ENCODE measurements at regions of chr7 and their contacts with region 1.

Region 1: GRCh38 chr7:51162724-51163329 is 153.8 kb downstream of the COBL start:
- DNase-seq: peak; percentile 93
- H3K4me3 ChIP-seq: no peak overlapping the region
- H3K27ac ChIP-seq: peak overlapping the region; percentile 40 to 51
- H3K4me1 ChIP-seq: no peaks in the 10 kb centered on the region
- H3K27me3 ChIP-seq: no peaks in the 10 kb centered on the region
- CTCF ChIP-seq: peak; percentile 70 to 92 (median 88)
- POLR2A ChIP-seq: no peak

Region 2: DNA sequence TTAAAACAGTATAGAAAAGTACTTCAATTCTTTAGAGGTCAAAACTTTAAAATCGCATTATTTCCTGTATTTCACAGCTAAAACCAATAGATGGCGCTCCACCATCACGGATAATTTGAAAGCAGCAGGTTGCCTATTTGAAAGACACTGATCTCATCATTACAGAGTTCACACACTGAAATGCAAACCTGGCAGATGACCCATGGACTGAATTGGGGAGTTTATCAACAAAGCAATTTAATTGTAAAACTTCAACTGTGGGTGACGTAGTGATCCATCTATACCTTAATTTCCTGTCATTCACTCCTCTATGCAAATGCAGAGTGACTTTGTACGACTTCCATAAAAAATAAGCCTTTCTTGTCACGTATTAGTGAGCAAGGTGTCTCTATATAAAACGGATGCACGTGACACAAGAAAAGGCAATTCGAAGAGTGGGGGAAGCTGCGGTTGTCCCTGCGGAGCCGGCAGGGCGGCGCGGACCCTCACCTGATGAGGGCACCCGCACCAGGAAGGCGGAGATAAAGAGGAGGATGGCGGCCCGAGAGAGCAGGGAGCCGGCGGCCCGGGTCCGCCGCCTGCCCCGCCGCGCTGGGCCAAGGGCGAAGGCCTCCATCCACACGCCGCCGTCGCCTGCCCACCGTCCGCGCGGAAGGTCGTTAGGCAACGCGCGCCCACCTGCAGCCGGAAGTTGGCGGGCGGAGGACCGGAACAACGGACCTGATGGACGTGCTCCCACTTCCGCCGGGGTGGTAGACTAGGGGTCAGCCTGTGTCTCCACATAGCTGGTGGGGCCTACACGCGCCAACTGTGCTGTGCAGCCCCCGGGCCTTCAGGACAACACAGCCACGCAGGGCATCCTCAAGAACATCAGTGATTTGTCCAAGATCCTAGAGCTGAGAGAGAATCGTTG is 1070.0 kb before region 1 on chr7 and contains the start of gene ZPBP:
- intact Hi-C with region 1: loop called (anchors 5 kb)
- DNase-seq: peak; percentile 26
- H3K4me3 ChIP-seq: peak within 1 kb of the TSS; percentile 32 to 41
- H3K27ac ChIP-seq: no peak within 1 kb of the TSS
- H3K4me1 ChIP-seq: no peaks in the 10 kb centered on the region
- H3K27me3 ChIP-seq: no peaks in the 10 kb centered on the region
- CTCF ChIP-seq: peak; percentile 23 to 77 (median 72)
- POLR2A ChIP-seq: no peak
- total RNA-seq, gene ZPBP: 13.6 TPM in 1 of 2 donors, not detected in the other

Region 3: DNA sequence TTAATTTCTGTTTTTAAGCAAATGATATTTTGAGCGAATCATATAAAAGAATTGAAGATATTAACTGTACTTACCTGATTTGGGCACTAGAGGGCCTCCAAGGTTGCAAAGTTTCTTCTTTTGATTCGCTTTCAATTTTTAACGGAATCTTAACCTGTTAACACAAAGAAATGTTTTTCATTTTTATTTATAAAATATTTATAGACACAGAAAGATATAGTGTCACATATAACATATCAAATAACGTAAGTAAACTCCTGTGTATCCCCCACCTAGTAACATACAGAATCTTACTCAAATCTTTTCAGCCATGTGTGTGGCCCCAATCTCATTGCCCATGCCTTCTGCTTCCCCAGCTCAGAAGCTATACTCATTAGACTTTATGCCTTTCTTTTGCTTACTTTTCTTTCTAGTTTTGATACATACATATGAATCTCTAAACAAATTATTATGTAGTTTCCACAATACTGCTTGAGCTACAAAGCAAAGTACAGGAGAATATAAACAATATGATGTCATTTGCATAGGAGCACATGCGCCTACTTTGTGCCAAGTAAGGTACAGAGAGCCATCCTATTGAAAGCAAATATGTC is 1020.3 kb before region 1 on chr7:
- intact Hi-C with region 1: loop called (anchors 2 kb)
- DNase-seq: no peak
- H3K4me3 ChIP-seq: no peak overlapping the region
- H3K27ac ChIP-seq: no peak overlapping the region
- H3K4me1 ChIP-seq: no peaks in the 10 kb centered on the region
- H3K27me3 ChIP-seq: no peaks in the 10 kb centered on the region
- CTCF ChIP-seq: peak; percentile 20 to 71 (median 62)
- POLR2A ChIP-seq: no peak

Region 4: DNA sequence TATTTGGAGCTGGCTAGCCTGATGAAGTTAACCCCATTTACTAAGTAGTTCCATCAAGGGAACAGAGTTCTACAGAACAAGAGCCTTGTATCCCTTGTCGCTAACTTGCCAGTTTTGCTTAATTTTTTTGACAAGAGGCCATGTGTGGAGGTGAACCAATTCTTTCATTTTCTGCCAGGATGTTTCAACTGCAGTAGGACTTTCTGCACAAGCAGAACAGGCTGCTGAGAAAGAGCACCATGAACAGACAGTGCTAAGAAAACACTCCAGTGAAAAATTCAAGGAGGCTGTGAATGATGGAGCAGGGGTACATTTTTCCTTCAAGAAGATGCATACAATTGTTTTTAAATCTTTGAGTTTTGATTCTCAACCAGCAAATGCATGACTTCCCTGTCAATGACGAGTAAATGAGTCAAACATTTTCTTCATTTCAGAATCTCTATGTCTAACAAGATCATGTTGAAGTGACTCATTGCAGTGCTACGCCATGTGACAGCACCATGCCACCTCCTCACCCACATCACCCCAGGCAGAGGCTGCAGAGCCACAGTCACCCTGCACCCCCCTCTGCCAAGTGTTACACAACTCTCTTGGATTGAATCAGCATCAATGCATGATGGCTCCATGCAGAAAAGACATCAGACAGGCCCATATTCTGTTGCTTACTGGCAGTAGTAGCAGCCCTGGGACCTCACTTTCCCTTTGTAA is 39.4 kb before region 1 on chr7:
- intact Hi-C with region 1: no loop called
- DNase-seq: no peak
- H3K4me3 ChIP-seq: no peak overlapping the region
- H3K27ac ChIP-seq: no peak overlapping the region
- H3K4me1 ChIP-seq: no peaks in the 10 kb centered on the region
- H3K27me3 ChIP-seq: no peaks in the 10 kb centered on the region
- CTCF ChIP-seq: no peak
- POLR2A ChIP-seq: no peak

Region 5: DNA sequence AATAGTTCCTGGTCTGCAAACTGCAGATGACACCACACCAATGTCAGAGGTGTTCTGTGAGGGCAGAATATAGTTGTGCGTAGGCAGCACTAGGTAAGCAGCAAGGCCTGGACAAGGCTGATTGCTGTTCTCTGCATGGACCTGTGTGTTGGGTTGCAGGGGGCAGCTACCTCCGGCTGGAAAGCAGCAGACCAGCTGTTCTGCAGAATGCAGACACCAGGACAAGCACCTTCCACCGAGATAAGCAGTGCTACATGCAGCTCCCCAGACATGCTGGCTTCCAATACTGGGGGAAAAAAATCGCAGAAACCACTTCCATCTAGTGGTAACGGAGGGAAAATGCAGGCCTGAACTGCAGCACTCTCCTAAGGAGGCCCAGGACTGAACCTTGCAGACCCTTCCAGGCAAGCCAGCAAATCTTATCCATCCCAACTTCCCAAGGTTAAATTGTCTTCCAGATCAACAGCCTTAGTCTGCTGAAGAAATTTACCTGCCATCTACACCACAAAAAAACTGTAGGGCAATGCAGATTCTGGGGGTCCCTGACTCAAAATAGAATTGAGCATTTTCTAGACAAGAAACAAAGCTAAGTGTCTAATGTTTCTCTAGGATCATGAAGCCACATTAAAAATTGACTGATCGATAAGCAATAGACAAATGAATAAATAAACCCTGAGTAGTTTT is 204.2 kb after region 1 on chr7:
- intact Hi-C with region 1: loop called (anchors 1 kb)
- DNase-seq: peak; percentile 54
- H3K4me3 ChIP-seq: no peak overlapping the region
- H3K27ac ChIP-seq: no peak overlapping the region
- H3K4me1 ChIP-seq: peaks cover 3% of the 10 kb centered on the region
- H3K27me3 ChIP-seq: no peaks in the 10 kb centered on the region
- CTCF ChIP-seq: peak; percentile 27 to 84 (median 74)
- POLR2A ChIP-seq: no peak

Measured in prostate gland (tissue), 2 donors.